Colonic mucosa (tissue), 4 donors: ENCODE measurements at regions of chr19 and their contacts with region 1.

Region 1: GRCh38 chr19:32464279-32464678 is 58.7 kb downstream of the DPY19L3 start:
- DNase-seq: no peak
- H3K4me3 ChIP-seq: no peak overlapping the region
- H3K27ac ChIP-seq: no peak overlapping the region
- H3K4me1 ChIP-seq: no peaks in the 10 kb centered on the region
- H3K27me3 ChIP-seq: no peaks in the 10 kb centered on the region
- CTCF ChIP-seq: no peak

Region 2: DNA sequence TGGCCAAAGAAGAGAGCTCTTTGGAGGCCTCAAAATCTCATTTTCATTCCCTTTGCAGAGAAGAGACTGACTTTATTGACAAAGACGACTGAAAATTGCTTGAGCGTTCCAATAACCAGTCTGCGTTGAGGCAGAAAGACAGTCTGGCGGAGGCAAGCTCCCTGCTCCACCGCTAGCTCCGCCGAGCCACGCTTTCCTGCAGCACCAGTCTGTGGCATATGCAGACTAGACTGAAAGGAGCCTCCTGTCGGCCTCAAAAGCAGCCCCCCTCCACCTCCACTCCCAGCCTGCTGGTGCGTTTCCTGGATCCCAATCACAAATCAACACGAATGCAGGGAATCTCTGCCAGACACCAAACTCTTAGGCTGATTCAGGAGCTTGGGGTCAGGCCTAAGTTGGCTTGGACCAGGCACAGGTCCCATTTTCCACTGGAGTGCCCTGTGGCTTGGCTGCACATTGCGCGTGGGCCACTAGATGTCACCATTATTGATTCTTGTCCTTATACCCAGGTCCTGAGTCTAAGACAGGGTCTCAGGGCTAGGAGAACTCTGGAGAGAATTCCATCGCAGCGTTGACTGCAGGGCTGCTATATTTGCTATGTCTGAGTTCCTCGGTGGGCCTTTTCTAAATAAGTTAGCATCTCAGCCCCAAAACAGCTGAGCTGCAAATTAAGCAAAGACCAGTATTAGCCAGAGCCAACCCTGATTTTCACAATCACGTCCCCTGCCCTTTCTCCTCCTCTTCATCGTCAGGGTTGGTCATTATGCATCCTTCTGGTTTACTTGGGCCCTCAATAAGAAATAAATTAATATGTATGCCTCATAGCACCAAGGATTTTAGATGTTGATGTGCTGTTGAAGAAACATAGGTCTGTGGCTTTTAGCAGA is 124.0 kb before region 1 on chr19:
- intact Hi-C with region 1: loop called (anchors 5 kb)
- DNase-seq: peak; percentile 66
- H3K4me3 ChIP-seq: no peak overlapping the region
- H3K27ac ChIP-seq: no peak overlapping the region
- H3K4me1 ChIP-seq: no peaks in the 10 kb centered on the region
- H3K27me3 ChIP-seq: no peaks in the 10 kb centered on the region
- CTCF ChIP-seq: peak; percentile 73